ENCODE measurements at regions of chr21 and their contacts with region 1.

Region 1: DNA sequence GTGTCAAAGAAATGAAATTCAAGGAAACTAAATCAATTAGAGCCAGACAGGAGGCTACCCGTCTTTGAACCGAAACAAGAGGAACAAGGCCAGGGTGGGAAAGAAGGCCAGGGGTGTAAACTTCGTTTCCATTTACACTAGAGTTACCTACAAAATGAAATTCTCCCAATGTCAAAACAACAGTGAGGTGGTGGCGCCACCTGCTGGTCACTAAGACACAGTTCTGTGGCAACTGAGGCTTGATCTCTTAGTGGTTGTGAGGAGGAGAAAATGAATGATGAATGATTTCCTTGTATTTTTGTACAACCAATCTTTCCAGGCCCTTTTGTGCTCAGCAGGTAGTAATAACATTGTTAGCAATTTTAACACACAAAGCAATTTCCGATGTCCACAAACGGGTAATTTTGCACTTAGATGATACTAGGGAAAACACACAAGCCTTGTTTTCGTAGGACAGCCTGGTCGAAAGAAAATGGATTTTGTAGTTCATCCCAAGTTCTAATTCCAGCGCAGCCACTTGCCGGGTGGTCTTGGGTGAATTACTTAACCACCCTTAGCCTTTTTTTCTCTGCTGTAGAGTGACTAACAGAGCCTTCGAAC is 54.8 kb upstream of the SOD1 start:
- DNase-seq: peak; percentile 82
- H3K4me3 ChIP-seq: no peak overlapping the region
- H3K27ac ChIP-seq: no peak overlapping the region
- H3K4me1 ChIP-seq: no peaks in the 10 kb centered on the region
- H3K27me3 ChIP-seq: no peaks in the 10 kb centered on the region
- CTCF ChIP-seq: peak; percentile 92 to 97 (median 93)
- POLR2A ChIP-seq: no peak

Region 2: DNA sequence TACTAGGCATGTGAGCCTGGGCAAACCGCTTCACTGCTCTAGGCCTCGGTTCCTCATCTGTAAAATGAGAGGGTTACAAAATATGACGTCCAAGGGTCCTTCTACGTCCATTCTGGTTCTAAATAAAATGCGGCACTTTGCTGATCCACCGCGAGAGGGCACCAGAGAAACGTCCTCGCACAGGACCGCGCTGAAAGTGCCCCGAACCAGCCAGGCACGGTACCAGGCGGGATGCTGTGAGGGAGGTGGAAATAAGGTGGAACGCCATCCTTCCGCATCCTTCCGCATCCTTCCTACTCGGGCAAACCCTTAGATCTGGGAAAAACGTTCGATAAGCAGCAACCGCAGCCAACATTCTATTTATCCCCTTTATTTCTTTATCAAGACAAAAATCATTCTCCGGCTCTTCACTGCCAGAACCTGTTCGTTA is 506.1 kb before region 1 on chr21:
- intact Hi-C with region 1: loop called (anchors 10 kb)
- DNase-seq: peak; percentile 85
- H3K4me3 ChIP-seq: no peak overlapping the region
- H3K27ac ChIP-seq: no peak overlapping the region
- H3K4me1 ChIP-seq: no peaks in the 10 kb centered on the region
- H3K27me3 ChIP-seq: no peaks in the 10 kb centered on the region
- CTCF ChIP-seq: peak; percentile 65 to 93 (median 85)
- POLR2A ChIP-seq: no peak

Region 3: GRCh38 chr21:31772674-31773555 is 168.2 kb after region 1 on chr21:
- intact Hi-C with region 1: no loop called
- DNase-seq: no peak
- H3K4me3 ChIP-seq: no peak overlapping the region
- H3K27ac ChIP-seq: no peak overlapping the region
- H3K4me1 ChIP-seq: no peaks in the 10 kb centered on the region
- H3K27me3 ChIP-seq: no peaks in the 10 kb centered on the region
- CTCF ChIP-seq: no peak
- POLR2A ChIP-seq: no peak